Activated CD8-positive, alpha-beta T cell treated with anti-CD3 and anti-CD28 coated beads for 36 hours (primary cell): ENCODE measurements at regions of chr2 and their contacts with region 1.

Region 1: DNA sequence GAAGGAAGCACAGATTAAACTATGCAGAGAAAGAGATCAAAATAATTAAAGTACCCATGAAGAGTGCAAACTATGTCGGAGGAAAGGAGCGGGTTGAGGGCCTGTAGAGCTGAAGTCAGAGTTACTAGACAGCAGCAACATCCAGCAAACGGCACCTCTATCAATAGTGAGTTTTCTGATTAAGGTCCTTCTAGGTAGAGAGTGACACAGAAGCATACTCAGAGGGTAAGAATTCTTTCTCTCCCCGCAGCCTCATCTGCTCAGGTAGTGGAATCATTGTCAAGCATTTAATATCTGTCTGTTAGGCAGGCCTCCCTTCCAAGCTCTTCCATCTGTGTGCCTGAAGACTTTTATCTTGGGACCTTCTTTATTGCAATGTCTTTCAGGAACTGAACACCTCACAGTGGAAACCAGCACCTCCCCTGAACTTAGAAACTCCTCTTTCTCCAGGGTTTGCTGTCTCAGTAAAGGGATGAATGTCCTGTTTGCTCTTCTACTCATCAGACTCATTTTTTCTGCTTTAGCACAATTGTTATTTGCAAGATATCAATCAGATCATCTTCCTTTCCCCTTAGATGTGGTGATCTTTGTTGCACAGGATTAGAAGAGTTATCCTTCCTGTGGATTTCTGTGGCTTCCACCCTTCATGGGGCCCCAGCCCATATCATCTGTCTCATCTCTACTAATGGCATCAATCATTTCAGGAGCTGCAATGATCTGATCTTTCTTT is 28.8 kb downstream of the SP140 start:
- DNase-seq: peak; percentile 76
- ATAC-seq: peak; percentile 72
- H3K4me3 Mint-ChIP-seq: no peak overlapping the region
- H3K27ac Mint-ChIP-seq: no peak overlapping the region
- H3K4me1 Mint-ChIP-seq: peaks cover 24% of the 10 kb centered on the region
- H3K27me3 Mint-ChIP-seq: no peaks in the 10 kb centered on the region
- CTCF ChIP-seq: no peak

Region 2: DNA sequence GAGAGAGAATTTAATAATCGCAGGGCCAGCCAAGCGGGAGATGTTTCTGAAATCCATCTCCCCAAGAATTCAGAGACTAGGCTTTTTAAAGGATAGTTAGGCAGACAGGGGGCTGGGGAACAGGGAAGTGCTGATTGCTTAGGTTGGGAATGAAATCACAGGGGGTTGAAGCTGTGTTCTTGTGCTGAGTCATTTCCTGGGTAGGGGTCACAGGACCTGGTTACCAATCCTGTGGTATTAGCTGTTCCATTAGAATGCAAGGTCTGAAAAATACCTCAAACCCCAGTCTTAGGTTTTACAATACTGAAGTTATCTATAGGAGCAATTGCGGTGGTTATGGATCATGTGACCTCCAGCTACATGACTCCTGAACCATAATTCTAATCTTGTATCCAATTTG is 24.2 kb before region 1 on chr2:
- CTCF ChIA-PET with region 1: no interaction called
- POLR2A ChIA-PET with region 1: no interaction called
- intact Hi-C with region 1: loop called (anchors 1 kb)
- DNase-seq: no peak
- ATAC-seq: no peak
- H3K4me3 Mint-ChIP-seq: peak overlapping the region; percentile 56
- H3K27ac Mint-ChIP-seq: peak overlapping the region; percentile 60
- H3K4me1 Mint-ChIP-seq: peaks cover 50% of the 10 kb centered on the region
- H3K27me3 Mint-ChIP-seq: no peaks in the 10 kb centered on the region
- CTCF ChIP-seq: no peak

Region 3: GRCh38 chr2:230319211-230319862 is 65.0 kb after region 1 on chr2:
- CTCF ChIA-PET with region 1: no interaction called
- POLR2A ChIA-PET with region 1: interaction called, 4 read pairs
- intact Hi-C with region 1: loop called (anchors 5 kb)
- DNase-seq: peak; percentile 88
- ATAC-seq: peak; percentile 96
- H3K4me3 Mint-ChIP-seq: peak overlapping the region; percentile 45
- H3K27ac Mint-ChIP-seq: peak overlapping the region; percentile 91
- H3K4me1 Mint-ChIP-seq: peaks cover 57% of the 10 kb centered on the region
- H3K27me3 Mint-ChIP-seq: no peaks in the 10 kb centered on the region
- CTCF ChIP-seq: no peak